Heart right ventricle (tissue), 16 donors: ENCODE measurements at regions of chr17 and their contacts with region 1.

Region 1: DNA sequence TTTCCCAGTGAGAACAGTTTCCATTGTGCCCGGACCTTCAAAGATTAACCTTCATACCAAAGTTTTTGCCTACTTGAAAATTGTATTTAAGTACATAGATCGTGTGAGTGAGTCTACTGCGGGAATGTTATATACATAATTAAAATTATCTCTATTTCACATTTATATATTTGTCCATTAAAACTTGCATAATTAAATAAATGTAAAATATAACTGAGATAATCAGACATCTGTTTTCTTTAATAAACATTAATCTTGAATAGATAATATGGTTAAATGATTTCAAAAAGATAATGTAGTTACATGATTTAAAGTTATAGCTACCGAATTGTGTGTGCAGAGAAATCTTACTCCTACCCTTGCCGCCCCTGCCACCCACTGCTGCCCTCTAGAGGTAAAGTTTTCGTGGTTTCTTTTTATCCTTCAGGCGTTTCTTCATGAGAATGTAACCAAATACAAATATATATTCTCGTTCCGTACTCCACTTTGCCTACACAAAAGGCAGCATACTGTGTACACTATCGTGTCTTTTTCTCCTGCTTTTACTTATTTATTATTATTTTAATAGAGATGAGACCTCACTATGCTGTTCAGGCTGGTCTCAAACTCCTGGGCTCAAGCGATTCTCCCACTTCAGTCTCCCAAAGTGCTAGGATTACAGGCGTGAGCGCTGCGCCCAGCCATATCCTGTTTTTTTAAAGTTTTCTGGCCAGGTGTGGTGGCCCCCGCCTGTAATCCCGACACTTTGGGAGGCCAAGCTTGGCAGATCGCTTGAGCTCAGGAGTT is 35.6 kb downstream of the RPA1 start:
- DNase-seq: peak in 1 of 2 donors; percentile 36
- ATAC-seq: peak in 1 of 8 donors; percentile 37
- H3K4me3 ChIP-seq: no peak overlapping the region
- H3K27ac ChIP-seq: no peak overlapping the region
- H3K4me1 ChIP-seq: no peaks in the 10 kb centered on the region
- H3K27me3 ChIP-seq: no peaks in the 10 kb centered on the region
- CTCF ChIP-seq: peak; percentile 48 to 75 (median 63)

Region 2: DNA sequence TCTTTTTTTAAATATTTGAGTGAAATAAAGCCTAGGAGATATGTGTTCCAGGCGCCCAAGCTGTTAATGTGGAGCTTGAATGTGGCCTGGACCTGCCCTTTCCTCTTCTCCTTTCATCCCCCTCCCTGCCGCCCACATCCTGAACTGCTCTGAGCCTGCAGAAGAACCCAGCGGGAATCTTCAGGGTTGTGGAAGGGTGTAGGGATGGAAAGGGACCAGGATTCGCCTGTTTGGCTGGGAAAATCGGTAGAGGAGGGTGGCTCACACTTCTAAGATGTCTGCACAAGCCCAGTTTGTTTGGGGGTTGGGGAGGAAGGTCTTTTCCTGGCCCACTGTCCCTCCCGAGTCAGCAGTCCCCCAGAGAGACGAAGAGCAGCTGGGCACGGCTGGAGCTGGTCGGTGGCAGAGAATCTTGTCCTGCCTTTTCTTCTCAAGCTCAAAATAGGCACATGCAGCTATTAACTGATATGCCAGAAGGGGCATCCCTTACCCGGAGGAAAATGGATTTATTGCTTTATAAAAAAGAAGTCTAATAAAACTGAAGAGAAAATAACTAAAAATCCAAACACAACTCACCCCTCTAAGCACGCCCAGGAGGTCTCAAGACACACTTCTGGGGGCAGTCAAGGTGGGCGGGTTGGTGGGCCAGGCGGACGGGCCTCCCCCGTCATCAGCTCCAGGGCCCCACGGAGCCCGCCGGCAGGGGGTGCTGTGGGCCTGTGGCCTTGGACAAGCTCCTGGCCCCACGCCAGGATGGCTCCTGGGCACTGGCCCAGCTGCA is 291.3 kb before region 1 on chr17:
- intact Hi-C with region 1: loop called in 2 of 10 experiments (anchors 10 kb)
- DNase-seq: peak; percentile 85 to 91
- ATAC-seq: peak; percentile 63 to 83 (median 72)
- H3K4me3 ChIP-seq: peak overlapping the region in 1 of 10 donors; percentile 6
- H3K27ac ChIP-seq: peak overlapping the region in 9 of 10 donors; percentile 55 to 94 (median 69)
- H3K4me1 ChIP-seq: peaks cover 26 to 54% (median 46%) of the 10 kb centered on the region in 9 donors
- H3K27me3 ChIP-seq: no peaks in the 10 kb centered on the region
- CTCF ChIP-seq: peak; percentile 95 to 99 (median 97)

Region 3: GRCh38 chr17:1661045-1661444 is 204.4 kb before region 1 on chr17:
- intact Hi-C with region 1: loop called in 4 of 10 experiments (anchors 5 to 10 kb)
- DNase-seq: no peak
- ATAC-seq: no peak
- H3K4me3 ChIP-seq: no peak overlapping the region
- H3K27ac ChIP-seq: no peak overlapping the region
- H3K4me1 ChIP-seq: no peaks in the 10 kb centered on the region
- H3K27me3 ChIP-seq: no peaks in the 10 kb centered on the region
- CTCF ChIP-seq: no peak

Region 4: GRCh38 chr17:1724506-1725362 is 140.7 kb before region 1 on chr17 and contains the start of gene WDR81:
- intact Hi-C with region 1: loop called in 7 of 10 experiments (anchors 2 to 10 kb)
- DNase-seq: peak; percentile 93
- ATAC-seq: peak; percentile 73 to 92 (median 89)
- H3K4me3 ChIP-seq: peak within 1 kb of the TSS; percentile 66 to 81 (median 72)
- H3K27ac ChIP-seq: peak within 1 kb of the TSS; percentile 76 to 97 (median 86)
- H3K4me1 ChIP-seq: peaks cover 11 to 78% (median 28%) of the 10 kb centered on the region in 9 donors
- H3K27me3 ChIP-seq: no peaks in the 10 kb centered on the region
- CTCF ChIP-seq: peak in 2 of 9 donors; percentile 2 to 26
- total RNA-seq, gene WDR81: 7.7 to 16.9 (median 9.2) TPM

Region 5: DNA sequence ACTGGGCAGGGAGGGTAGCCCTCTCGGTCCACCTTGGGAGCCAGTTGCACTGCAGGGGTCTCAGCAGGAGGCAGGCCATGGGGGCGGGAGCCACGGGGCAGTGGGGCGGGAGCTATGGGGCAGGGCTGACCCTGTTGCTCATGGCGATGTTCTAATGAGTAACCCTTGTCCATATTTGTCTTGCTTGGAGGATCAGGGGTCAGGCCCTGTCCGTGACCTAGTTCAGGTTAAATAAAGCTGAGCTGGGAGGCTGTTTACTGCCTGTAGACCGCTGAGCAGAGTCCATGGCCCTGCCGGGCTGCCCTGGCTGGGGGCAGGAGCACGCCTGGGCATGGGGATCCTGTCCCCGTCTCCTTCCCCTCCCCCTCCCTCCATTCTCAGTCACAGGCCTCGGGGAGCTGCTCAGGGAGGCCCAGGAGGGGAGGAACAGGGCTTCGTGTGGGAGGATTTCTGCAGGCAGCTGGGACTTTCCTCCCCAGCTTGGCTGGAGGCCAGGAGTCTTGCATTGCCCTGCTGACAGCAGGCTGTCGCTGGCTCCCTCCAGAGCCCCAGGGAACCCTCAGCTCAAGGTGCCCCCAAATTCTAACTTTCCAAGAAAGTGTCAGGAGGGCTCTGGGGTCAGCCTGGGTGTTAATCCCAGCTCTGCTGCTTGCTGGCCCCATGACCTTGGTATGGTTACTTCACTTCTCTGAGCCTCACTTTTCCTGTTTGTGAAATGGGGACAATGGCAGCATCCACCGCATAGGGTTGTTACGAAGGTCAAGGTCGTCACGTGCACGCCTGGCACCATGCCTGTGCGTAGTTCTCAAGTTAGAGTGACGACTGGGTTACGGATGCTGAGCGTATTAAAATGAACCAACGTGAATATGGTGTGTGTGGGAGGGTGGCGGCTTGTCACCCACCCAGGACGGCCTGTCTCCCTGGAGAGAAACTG is 128.8 kb before region 1 on chr17:
- intact Hi-C with region 1: loop called in 1 of 10 experiments (anchors 10 kb)
- DNase-seq: peak; percentile 69 to 75
- ATAC-seq: peak; percentile 51 to 78 (median 64)
- H3K4me3 ChIP-seq: no peak overlapping the region
- H3K27ac ChIP-seq: peak overlapping the region in 8 of 10 donors; percentile 7 to 61 (median 34)
- H3K4me1 ChIP-seq: peaks cover 9 to 27% (median 19%) of the 10 kb centered on the region in 9 donors
- H3K27me3 ChIP-seq: no peaks in the 10 kb centered on the region
- CTCF ChIP-seq: no peak

Region 6: GRCh38 chr17:1769822-1770477 is 95.5 kb before region 1 on chr17:
- intact Hi-C with region 1: no loop called
- DNase-seq: no peak
- ATAC-seq: peak in 1 of 8 donors; percentile 12
- H3K4me3 ChIP-seq: no peak overlapping the region
- H3K27ac ChIP-seq: no peak overlapping the region
- H3K4me1 ChIP-seq: peaks cover 0 to 43% (median 11%) of the 10 kb centered on the region in 9 donors
- H3K27me3 ChIP-seq: no peaks in the 10 kb centered on the region
- CTCF ChIP-seq: no peak

Region 7: GRCh38 chr17:1899403-1900000 is 34.1 kb after region 1 on chr17:
- intact Hi-C with region 1: no loop called
- DNase-seq: no peak
- ATAC-seq: no peak
- H3K4me3 ChIP-seq: no peak overlapping the region
- H3K27ac ChIP-seq: no peak overlapping the region
- H3K4me1 ChIP-seq: peaks cover 0 to 4% (median 0%) of the 10 kb centered on the region in 9 donors
- H3K27me3 ChIP-seq: no peaks in the 10 kb centered on the region
- CTCF ChIP-seq: no peak